HepG2 (cell line): ENCODE measurements at regions of chr16 and their contacts with region 1.

Region 1: DNA sequence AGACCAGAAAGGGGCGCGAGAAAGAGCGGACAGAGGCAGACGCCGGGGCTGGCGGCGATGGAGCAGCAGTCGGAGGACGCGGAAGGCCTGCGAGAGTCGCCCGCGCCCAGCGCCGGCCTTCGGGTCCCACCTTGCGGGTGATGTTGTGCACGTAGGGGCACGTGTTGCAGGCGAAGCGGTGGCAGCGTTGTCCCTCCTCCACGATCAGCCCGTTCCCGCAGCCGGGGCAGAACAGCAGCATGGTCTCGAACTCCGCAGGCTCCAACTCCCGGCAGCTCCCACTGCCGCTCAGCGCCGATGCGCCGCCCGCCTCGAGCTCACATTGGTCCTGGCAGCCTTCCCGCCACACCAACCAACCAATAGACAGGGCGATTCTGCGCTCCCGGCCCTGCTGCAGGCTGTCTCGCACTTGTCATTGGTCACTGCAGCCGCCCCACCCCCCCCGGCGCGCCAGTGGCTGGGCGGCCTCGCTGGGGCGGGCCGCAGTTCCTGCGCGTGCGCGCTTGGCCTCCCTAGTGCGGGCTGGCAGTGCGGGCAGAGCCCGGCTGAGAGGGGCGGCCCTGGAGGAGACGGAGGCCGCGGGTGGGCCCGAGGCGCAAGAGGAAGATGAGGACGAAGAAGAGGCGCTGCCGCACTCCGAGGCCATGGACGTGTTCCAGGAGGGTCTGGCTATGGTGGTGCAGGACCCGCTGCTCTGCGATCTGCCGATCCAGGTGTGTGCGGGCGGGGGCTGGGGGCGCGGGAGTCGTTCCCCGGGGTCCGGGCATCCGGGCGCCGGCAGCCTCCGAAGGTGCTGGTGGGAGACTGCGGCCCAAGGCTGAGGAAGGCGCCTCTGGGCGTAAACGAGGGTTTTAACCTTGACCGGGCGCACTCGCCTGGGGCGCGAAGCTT is at the starts of genes POLR3K and SNRNP25:
- DNase-seq: peak; percentile 95
- ATAC-seq: peak; percentile 98
- H3K4me3 ChIP-seq: peak within 1 kb of the TSS; percentile 88 to 91 (median 91)
- H3K27ac ChIP-seq: peak within 1 kb of the TSS; percentile 93
- H3K4me1 ChIP-seq: peaks cover 27% of the 10 kb centered on the region
- H3K27me3 ChIP-seq: no peaks in the 10 kb centered on the region; a peak in 1 of 5 replicates
- CTCF ChIP-seq: no peak
- EP300 ChIP-seq: no peak
- POLR2A ChIP-seq: peak; percentile 74 to 87
- RAD21 ChIP-seq: peak; percentile 57
- total RNA-seq, gene POLR3K: 18.8 and 22.4 TPM in 2 replicates
- total RNA-seq, gene SNRNP25: 97.4 and 103 TPM in 2 replicates

Region 2: DNA sequence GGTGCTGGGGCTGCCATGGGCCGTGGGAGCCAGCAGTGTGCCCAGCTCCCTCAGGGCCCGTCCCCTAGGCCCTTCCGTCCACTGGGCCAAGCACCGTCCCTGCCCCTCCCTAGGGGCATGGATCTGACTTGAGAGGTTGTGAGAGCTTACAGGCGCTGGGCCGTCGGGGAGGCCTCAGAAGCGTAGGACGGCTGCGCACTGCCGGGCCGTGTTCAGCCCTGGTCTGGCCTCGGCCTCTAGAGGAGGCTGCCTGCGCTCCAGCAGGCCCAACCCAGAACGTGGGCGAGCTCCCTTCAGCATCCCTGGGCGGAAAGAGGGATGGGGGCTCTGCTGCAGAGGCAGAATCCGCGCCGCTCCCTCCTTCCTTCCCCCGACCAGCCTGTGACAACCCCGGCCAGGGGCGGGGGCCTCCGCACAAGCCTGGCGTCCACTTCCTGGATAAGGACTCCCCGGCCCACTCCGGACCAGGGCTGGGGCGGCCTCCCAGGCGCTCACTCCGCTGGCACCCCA is 23.8 kb after region 1 on chr16:
- CTCF ChIA-PET with region 1: no interaction called
- POLR2A ChIA-PET with region 1: interaction called, 12 read pairs
- in situ Hi-C with region 1: no loop called
- intact Hi-C with region 1: no loop called
- DNase-seq: peak; percentile 29
- ATAC-seq: peak; percentile 34
- H3K4me3 ChIP-seq: peak overlapping the region; percentile 63 to 84 (median 80)
- H3K27ac ChIP-seq: peak overlapping the region; percentile 62
- H3K4me1 ChIP-seq: peaks cover 62% of the 10 kb centered on the region
- H3K27me3 ChIP-seq: peaks cover 2 to 8% of the 10 kb centered on the region in 2 experiments; a peak in 2 of 5 replicates
- CTCF ChIP-seq: no peak
- EP300 ChIP-seq: no peak
- POLR2A ChIP-seq: no peak
- RAD21 ChIP-seq: no peak

Region 3: GRCh38 chr16:91484-91883 is 37.9 kb after region 1 on chr16:
- CTCF ChIA-PET with region 1: no interaction called
- POLR2A ChIA-PET with region 1: no interaction called
- in situ Hi-C with region 1: no loop called
- intact Hi-C with region 1: no loop called
- DNase-seq: no peak
- ATAC-seq: no peak
- H3K4me3 ChIP-seq: no peak overlapping the region
- H3K27ac ChIP-seq: no peak overlapping the region
- H3K4me1 ChIP-seq: peaks cover 8% of the 10 kb centered on the region
- H3K27me3 ChIP-seq: no peaks in the 10 kb centered on the region
- CTCF ChIP-seq: no peak
- EP300 ChIP-seq: no peak
- POLR2A ChIP-seq: no peak
- RAD21 ChIP-seq: no peak